ENCODE measurements at regions of chr6 and their contacts with region 1.

Region 1: DNA sequence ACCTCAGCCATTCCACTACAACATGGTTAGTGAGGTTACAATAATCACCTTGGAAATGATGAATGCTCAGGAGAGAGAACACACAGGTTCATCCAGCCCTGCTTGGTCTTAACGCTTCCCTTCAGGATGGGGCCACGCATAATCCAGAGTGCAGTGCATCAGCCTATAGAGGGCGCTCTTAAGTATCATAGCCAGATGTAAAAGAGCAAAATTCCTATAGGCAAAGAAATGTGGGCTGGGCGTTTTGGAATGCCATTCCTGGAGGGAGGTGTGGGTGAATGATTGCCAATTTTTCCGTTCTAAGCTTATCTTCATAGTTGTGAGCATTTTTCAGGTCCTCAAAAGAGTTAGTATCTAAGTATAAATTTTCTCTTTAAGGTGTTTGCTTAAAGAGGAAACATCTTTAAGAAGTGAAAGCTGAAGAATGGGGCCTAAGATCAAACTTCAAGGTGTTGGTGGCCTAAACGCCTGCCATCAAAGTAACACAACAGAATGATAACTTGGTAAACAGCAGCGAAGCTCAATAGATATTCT is 1.8 kb downstream of the RIPOR2 start:
- DNase-seq: peak; percentile 67
- H3K4me3 Mint-ChIP-seq: peak overlapping the region; percentile 96
- H3K27ac Mint-ChIP-seq: peak overlapping the region; percentile 96
- H3K4me1 Mint-ChIP-seq: peaks cover 73% of the 10 kb centered on the region
- H3K27me3 Mint-ChIP-seq: no peaks in the 10 kb centered on the region

Region 2: DNA sequence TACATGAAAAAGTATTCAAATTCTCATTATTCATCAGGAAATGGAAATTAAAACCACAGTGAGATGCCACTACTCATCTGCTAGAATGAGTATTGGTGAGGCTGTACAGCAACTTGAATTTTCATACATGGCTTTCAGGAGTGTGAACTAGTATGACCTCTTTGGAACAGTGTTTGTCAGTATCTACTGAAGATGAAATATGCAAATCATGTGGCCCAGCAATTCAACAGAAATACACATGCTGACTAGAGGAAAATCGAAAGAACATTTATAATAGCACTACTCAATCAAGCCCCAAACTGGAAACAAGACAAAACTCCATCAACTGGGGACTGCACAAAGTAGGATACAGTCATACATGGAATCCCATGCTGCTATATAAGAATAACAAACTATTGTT is 678.3 kb before region 1 on chr6:
- CTCF ChIA-PET with region 1: no interaction called
- intact Hi-C with region 1: no loop called
- DNase-seq: no peak
- H3K4me3 Mint-ChIP-seq: no peak overlapping the region
- H3K27ac Mint-ChIP-seq: no peak overlapping the region
- H3K4me1 Mint-ChIP-seq: peaks cover 6% of the 10 kb centered on the region
- H3K27me3 Mint-ChIP-seq: peaks cover 15% of the 10 kb centered on the region

Region 3: GRCh38 chr6:24720604-24721460 is 213.1 kb before region 1 on chr6:
- CTCF ChIA-PET with region 1: no interaction called
- intact Hi-C with region 1: loop called (anchors 2 kb)
- DNase-seq: peak; percentile 100
- H3K4me3 Mint-ChIP-seq: peak overlapping the region; percentile 99
- H3K27ac Mint-ChIP-seq: peak overlapping the region; percentile 95
- H3K4me1 Mint-ChIP-seq: peaks cover 29% of the 10 kb centered on the region
- H3K27me3 Mint-ChIP-seq: no peaks in the 10 kb centered on the region

Region 4: GRCh38 chr6:24883618-24884017 is 50.3 kb before region 1 on chr6:
- CTCF ChIA-PET with region 1: interaction called, 29 read pairs
- intact Hi-C with region 1: loop called (anchors 1 kb)
- DNase-seq: peak; percentile 82
- H3K4me3 Mint-ChIP-seq: peak overlapping the region; percentile 73
- H3K27ac Mint-ChIP-seq: peak overlapping the region; percentile 99
- H3K4me1 Mint-ChIP-seq: peaks cover 91% of the 10 kb centered on the region
- H3K27me3 Mint-ChIP-seq: no peaks in the 10 kb centered on the region

Region 5: DNA sequence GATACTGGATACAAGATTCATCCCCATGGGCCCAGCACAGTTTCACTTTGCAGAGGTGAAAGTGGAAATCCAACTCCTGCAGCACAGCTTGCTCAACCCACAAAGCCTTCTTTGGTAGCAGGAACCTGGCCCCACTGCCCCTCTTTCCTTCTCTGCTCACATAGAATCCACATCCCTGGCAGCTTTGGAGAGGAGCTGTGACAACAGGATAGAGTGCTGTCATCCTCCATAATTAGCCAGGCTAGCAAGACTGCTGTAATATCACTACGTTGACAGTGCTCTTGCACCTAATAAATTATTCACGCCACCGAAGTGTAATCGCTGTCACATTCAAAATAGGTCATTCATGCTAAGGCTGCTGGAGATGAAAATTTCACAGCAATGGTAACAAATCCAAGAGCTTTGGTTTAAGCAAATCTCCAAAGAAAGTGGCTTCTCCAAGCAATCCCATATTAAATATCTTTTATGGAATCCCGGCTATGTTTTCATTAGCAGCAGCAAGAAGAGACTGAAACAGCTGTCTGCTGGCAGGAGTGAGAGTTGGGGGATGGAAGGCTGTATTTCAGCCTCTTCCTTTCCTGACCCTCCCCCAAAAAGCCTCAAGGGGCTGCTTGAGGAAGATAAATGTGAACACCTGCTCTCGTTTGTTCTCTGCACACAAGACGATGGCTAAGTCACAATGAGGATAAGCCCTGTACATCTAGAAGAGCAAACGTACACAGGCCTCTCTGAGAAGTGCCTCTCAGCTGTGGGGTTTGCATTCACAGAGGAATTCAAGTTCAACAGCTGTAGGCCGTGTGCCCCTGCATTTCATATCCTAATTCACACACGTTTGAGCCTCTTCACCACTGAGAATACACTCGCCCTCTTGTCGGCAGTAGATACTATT is 14.7 kb before region 1 on chr6:
- CTCF ChIA-PET with region 1: interaction called, 129 read pairs
- intact Hi-C with region 1: loop called (anchors 1 kb)
- DNase-seq: peak; percentile 60
- H3K4me3 Mint-ChIP-seq: peak overlapping the region; percentile 57
- H3K27ac Mint-ChIP-seq: peak overlapping the region; percentile 95
- H3K4me1 Mint-ChIP-seq: peaks cover 90% of the 10 kb centered on the region
- H3K27me3 Mint-ChIP-seq: no peaks in the 10 kb centered on the region

Region 6: DNA sequence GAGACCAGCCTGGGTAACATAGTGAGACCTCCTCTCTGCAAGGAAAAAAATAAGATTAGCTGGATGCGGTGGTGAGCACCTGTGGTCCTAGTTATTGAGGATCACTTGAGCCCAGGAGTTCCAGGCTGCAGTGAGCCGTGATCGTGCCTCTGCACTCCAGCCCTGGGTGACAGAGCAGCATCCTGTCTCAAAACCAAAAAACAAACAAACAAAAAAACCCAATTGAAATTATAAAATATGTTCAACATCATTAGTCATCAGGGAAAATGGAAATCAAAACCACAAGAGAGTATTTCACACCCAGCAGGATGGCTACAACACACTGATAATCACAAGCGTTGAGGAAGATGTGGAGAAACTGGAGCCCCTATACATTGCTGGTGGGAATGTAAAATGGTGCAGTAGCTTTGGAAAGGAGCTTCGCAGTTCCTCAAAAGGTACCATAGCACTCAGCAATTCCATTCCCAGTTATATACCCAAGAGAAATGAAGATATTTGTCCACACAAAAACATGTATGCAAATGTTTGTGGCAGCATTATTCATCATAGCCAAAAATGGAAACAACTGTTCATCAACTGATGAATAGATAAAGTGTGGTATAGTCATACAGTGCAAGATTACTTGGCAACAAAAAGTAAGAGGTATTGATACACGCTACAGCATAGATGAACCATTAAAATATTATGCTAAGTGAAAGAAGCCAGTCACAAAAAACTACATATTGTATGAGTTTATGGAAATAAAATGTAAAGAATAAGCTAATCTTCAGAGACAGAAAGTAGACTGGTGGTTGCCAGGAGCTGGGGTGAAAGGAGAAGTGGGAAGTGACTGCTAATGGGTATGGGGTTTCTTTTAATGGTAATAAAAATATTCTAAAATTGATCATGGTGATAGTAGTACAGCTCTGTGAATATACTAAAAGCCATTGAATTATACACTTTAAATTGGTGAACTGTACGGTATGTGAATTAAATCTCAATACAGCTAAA is 40.5 kb after region 1 on chr6:
- CTCF ChIA-PET with region 1: interaction called, 29 read pairs
- intact Hi-C with region 1: loop called (anchors 1 kb)
- DNase-seq: peak; percentile 59
- H3K4me3 Mint-ChIP-seq: peak overlapping the region; percentile 16
- H3K27ac Mint-ChIP-seq: peak overlapping the region; percentile 92
- H3K4me1 Mint-ChIP-seq: peaks cover 58% of the 10 kb centered on the region
- H3K27me3 Mint-ChIP-seq: no peaks in the 10 kb centered on the region

Region 7: DNA sequence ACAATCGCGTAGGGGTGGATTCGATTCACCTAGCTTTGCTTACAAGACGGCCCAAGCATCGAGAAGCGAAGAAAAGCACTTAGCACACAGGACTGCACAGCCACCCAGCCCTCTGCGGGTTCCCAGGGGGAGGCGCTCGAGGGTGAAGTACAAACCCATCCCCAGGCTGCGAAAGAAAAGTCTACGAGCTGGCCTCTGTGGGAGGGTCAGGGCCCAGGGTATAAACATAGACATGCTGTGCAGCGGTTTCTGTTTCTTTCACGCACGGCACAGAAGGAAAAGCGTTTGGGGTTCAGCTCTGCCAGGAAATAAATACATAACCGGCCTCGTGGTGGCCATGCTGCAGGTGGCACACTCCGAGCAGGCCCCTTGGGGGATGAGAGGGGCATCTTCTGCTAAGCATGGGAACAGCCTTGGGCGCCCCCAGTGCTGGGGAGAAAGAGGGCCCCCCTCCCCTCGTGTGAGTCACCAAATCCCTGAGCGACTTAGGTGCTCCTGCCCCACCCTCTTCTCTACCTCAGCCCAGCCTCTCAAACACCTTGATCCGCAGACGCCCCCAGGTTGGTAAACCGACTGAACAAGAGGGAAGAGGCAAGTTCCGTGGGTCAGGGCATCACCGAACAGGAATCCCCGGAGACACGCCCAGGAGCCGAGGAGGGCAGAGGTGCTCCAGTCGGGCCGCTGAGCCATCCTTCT is 93.4 kb after region 1 on chr6:
- CTCF ChIA-PET with region 1: interaction called, 40 read pairs
- intact Hi-C with region 1: no loop called
- DNase-seq: peak; percentile 90
- H3K4me3 Mint-ChIP-seq: peak overlapping the region; percentile 65
- H3K27ac Mint-ChIP-seq: peak overlapping the region; percentile 78
- H3K4me1 Mint-ChIP-seq: peaks cover 52% of the 10 kb centered on the region
- H3K27me3 Mint-ChIP-seq: no peaks in the 10 kb centered on the region

Region 8: GRCh38 chr6:25186919-25187318 is 253.0 kb after region 1 on chr6:
- CTCF ChIA-PET with region 1: no interaction called
- intact Hi-C with region 1: no loop called
- DNase-seq: no peak
- H3K4me3 Mint-ChIP-seq: no peak overlapping the region
- H3K27ac Mint-ChIP-seq: no peak overlapping the region
- H3K4me1 Mint-ChIP-seq: peaks cover 8% of the 10 kb centered on the region
- H3K27me3 Mint-ChIP-seq: peaks cover 14% of the 10 kb centered on the region

Region 9: DNA sequence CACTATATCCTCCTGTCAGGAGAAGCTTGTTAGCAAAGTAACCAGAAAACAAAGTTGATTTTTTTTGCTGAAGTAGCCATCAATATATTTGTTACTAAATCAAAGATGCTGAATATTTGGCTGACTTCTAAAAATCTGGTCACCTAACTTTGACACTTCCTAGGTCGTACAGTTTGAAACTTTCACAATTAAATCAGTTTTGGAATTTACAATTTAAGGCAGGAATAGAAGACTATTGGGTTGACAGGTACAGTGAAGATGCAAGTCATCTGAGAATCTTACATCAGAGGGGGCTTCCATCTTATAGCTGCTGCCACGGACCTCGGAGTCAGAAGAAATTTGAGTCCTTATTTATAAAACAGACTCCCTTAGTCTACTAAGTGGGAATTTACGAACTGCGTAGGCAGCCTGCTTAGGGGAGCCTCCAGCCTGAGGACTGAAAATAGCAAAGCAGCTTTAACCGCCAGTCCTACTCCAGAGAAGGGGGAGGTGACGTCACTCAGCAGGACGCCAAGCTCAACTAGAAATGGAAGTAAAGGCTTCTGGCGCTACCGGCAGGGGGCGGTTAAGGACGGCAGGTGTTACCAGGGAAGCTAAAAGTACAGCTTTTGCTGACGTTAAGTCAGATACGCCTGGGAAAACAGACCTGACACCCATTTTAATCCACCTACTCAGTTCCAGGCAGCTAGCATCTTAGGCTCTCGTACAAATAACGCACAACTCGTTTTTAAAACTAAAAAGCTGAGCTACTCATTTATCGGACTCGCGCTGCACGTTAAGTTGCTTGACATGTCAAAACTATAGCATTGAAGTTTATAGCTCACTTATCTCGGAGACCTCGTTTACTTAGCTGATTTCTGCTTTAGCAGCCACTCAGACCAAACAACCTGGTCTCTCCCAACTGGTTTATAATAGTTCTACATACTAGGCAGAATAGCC is 1092.2 kb after region 1 on chr6:
- CTCF ChIA-PET with region 1: no interaction called
- intact Hi-C with region 1: loop called (anchors 10 kb)
- DNase-seq: peak; percentile 98
- H3K4me3 Mint-ChIP-seq: peak overlapping the region; percentile 87
- H3K27ac Mint-ChIP-seq: peak overlapping the region; percentile 99
- H3K4me1 Mint-ChIP-seq: peaks cover 31% of the 10 kb centered on the region
- H3K27me3 Mint-ChIP-seq: no peaks in the 10 kb centered on the region

Measured in activated naive CD4-positive, alpha-beta T cell treated with anti-CD3 and anti-CD28 coated beads for 36 hours (primary cell).